ENCODE measurements at regions of chrX and their contacts with region 1.

Region 1: GRCh38 chrX:45515262-45516215 is 314.9 kb upstream of the DIPK2B start:
- DNase-seq: peak; percentile 98
- H3K4me3 Mint-ChIP-seq: peak overlapping the region; percentile 64
- H3K27ac Mint-ChIP-seq: peak overlapping the region; percentile 14
- H3K4me1 Mint-ChIP-seq: peaks cover 27% of the 10 kb centered on the region
- H3K27me3 Mint-ChIP-seq: peaks cover 18% of the 10 kb centered on the region
- CTCF ChIP-seq: peak; percentile 70

Region 2: GRCh38 chrX:45479835-45480422 is 35.6 kb before region 1 on chrX:
- CTCF ChIA-PET with region 1: interaction called, 5 read pairs
- POLR2A ChIA-PET with region 1: interaction called, 19 read pairs
- intact Hi-C with region 1: no loop called
- DNase-seq: peak; percentile 92
- H3K4me3 Mint-ChIP-seq: no peak overlapping the region
- H3K27ac Mint-ChIP-seq: peak overlapping the region; percentile 98
- H3K4me1 Mint-ChIP-seq: peaks cover 12% of the 10 kb centered on the region
- H3K27me3 Mint-ChIP-seq: peaks cover 10% of the 10 kb centered on the region
- CTCF ChIP-seq: no peak

Region 3: DNA sequence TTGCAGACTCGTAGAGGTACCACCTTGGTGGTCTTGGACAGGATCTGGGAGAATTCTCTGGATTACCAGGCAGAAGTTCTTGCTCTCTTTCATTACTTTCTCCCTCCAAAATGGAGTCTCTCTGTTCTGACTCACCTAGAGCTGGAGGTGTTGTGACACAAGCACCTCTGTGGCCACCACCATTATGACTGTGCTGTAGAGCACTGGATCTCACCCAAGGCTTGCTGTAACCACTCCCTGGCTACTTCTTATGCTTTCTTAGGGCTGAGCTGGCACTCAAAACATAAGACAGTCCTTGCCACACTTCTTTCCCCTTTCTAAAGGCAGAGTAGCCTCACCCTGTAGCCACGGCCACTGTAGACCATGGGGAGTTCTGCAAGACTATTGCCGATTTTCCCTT is 18.2 kb before region 1 on chrX:
- CTCF ChIA-PET with region 1: no interaction called
- POLR2A ChIA-PET with region 1: no interaction called
- intact Hi-C with region 1: no loop called
- DNase-seq: peak; percentile 85
- H3K4me3 Mint-ChIP-seq: no peak overlapping the region
- H3K27ac Mint-ChIP-seq: peak overlapping the region; percentile 64
- H3K4me1 Mint-ChIP-seq: peaks cover 15% of the 10 kb centered on the region
- H3K27me3 Mint-ChIP-seq: peaks cover 25% of the 10 kb centered on the region
- CTCF ChIP-seq: no peak

Region 4: DNA sequence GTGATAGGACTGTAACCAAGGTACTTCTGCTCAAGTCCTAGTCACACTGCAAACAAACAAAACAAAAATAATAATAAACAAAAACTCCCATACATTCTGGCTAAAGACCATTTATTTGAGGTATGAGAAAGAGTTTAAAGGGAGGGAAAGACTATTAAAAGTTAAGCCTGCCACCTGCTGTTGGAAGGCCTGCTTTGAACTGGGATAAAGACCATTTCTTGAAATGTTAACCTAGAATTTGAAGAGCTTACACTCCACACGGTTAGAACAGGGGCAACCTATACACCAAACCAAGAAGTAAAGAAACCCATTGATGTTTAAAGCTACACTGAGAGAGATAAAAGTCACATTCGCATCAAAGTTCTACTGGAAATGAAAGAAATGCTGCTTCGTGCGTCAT is 233.8 kb after region 1 on chrX:
- CTCF ChIA-PET with region 1: interaction called, 10 read pairs
- POLR2A ChIA-PET with region 1: interaction called, 46 read pairs
- intact Hi-C with region 1: loop called (anchors 1 kb)
- DNase-seq: no peak
- H3K4me3 Mint-ChIP-seq: no peak overlapping the region
- H3K27ac Mint-ChIP-seq: peak overlapping the region; percentile 60
- H3K4me1 Mint-ChIP-seq: peaks cover 22% of the 10 kb centered on the region
- H3K27me3 Mint-ChIP-seq: peaks cover 25% of the 10 kb centered on the region
- CTCF ChIP-seq: peak; percentile 41

Region 5: DNA sequence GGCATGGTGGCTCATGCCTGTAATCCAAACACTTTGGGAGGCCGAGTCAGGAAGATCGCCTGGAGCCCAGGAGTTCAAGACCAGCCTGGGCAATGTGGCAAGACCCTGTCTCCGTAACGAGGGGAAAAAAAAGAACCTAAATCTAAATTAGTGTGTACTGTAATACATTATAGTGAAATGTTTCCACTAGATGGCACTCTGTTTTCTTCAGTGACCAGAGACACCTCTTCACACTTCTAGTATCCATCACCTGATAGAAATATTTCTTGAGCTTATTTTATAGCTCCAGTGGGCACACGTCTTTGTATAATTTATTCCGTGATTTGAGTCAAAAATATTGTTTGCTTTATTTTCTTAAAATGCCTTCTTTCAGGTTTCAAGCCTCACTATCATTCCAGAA is 286.0 kb after region 1 on chrX:
- CTCF ChIA-PET with region 1: no interaction called
- POLR2A ChIA-PET with region 1: interaction called, 5 read pairs
- intact Hi-C with region 1: loop called (anchors 1 kb)
- DNase-seq: peak; percentile 66
- H3K4me3 Mint-ChIP-seq: peak overlapping the region; percentile 47
- H3K27ac Mint-ChIP-seq: peak overlapping the region; percentile 67
- H3K4me1 Mint-ChIP-seq: peaks cover 24% of the 10 kb centered on the region
- H3K27me3 Mint-ChIP-seq: peaks cover 49% of the 10 kb centered on the region
- CTCF ChIP-seq: peak; percentile 46

Region 6: DNA sequence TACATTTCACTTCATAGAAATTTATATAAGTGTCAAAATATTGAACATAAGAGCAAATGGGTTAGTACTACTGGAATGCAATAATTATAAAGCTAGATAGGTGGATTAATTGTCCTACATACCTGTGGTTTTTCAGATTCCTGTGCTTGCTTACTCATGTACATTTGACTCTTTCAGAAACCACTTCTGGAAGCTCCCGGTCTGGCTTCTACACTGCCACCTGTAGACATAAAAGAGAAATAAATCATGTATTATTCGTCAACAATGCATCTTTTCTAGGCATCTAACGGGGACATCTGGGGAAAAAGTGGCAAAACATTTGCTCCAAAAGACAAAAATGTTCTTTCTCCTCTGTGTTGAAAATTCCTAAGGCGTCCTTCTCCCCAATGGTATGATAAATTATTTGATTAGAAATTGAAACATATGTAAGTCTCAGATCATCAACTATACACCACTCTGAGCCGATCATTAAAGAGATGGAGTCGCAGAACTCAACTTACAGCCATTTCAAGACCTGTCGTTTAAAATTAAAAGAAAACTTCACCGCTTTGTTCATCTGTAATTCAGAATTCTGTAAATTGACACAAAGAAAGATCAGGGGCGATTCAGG is 333.8 kb after region 1 on chrX:
- CTCF ChIA-PET with region 1: no interaction called
- POLR2A ChIA-PET with region 1: interaction called, 7 read pairs
- intact Hi-C with region 1: loop called (anchors 2 kb)
- DNase-seq: peak; percentile 75
- H3K4me3 Mint-ChIP-seq: peak overlapping the region; percentile 89
- H3K27ac Mint-ChIP-seq: peak overlapping the region; percentile 67
- H3K4me1 Mint-ChIP-seq: no peaks in the 10 kb centered on the region
- H3K27me3 Mint-ChIP-seq: peaks cover 14% of the 10 kb centered on the region
- CTCF ChIP-seq: peak; percentile 26